Right ventricle myocardium superior (tissue), 1 donor: ENCODE measurements at regions of chr18 and their contacts with region 1.

Region 1: GRCh38 chr18:7272311-7273049 is 41.6 kb downstream of the LRRC30 start:
- DNase-seq: peak; percentile 77
- ATAC-seq: peak; percentile 93

Region 2: DNA sequence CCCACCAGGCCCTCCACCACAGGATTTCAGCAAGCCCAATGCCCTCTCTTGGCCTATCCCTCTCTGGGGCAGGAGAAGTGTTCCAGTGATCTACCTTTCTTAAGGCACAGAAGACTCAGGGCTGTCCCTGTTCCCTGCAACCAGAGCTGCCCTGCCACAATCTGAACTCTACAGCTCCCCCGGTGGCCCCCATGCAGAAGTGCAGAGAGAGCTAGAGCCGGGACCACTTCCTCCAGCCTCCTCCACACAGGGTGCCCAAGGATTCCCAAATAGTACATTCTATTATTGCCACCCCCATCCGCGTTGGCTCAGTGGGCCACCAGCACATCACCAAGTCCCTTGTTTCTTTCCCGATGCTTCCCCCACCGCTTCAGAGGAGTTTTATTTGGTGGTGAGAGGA is 179.9 kb after region 1 on chr18:
- intact Hi-C with region 1: loop called (anchors 10 kb)
- DNase-seq: no peak
- ATAC-seq: peak; percentile 89

Region 3: DNA sequence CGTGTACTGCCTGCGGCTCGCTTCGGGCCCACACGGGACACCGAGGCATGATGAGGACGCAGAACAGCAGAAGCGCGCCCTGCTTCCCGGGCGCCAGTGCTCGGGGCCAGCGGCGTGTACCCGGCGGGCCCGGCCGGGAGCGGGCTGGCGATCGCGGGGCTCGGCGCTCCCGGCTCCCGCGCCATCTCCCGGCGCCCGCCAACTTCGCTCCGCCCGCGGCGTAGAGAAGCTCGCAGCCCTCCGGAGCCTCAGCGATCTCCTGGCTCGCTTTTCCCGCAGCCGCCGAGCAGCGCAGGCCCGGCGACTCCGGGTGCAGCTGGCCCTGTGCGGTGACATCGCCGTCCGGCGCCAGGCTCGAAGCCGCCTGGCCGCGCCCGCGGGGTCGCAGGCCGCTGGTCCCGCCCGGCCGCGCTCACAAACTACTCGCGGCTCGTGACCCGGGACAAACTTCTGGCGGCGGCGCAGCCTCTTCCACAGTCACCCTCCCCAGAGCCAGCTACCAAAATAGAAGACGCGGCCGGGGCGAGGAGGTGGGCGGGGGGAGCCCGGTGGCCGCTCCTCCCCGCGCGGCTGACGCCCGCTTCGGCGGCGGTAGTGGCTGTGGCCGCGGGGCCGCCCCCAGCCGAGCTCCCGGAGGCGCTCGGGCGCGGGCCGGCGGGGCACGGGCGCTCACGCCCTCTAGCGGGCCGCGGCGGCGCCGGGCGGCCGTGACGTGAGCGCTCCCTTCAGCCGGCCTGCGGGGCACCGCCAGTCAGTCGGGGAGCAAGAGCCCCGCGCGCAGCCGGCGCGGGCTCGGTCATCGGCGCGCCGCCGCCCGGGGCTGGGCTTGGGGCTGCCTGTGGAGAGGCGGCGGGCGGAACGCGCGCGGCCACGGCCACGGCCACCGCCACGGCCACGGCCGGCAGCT is 294.3 kb after region 1 on chr18 and contains the start of gene PTPRM:
- intact Hi-C with region 1: loop called (anchors 1 kb)
- DNase-seq: peak; percentile 95
- ATAC-seq: peak; percentile 93
- total RNA-seq, gene PTPRM: 101 TPM

Region 4: GRCh38 chr18:8478166-8478967 is 1205.9 kb after region 1 on chr18:
- intact Hi-C with region 1: loop called (anchors 5 kb)
- DNase-seq: peak; percentile 58
- ATAC-seq: peak; percentile 64